GM12878 (cell line): ENCODE measurements at regions of chr1 and their contacts with region 1.

Region 1: DNA sequence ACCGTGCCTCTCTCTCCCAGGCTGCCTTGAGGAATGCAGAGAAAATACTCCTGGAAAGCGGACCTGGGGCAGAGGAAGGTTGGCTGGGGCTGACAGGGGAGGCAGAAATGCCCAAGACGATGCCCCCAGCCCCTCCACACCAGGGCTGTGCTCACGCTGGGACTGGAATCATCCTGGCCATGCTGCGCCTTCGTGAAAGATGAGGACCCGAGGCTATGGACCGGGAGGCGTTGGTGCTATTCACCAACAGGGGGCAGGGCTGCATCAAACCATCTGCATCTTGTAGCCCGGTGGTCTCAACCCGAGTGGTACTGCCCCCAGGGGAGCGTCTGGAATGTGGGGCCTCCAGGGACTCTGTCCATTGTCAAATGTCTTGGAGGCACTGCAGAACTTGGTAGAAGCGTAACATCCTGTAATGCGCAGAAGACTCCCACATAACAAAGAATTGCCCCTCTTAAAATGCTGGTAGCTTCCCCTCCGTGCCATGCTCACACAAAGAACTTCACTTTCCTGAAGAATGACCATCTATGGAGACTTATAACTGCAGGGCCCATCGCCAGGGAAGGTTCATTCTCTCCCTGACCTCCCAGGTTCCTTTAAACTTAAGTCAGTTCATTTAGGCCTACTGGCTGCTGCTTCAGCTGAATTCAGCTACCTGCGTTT is 251.2 kb downstream of the RRAGC start:
- DNase-seq: no peak
- ATAC-seq: peak; percentile 53; the same call in 2 of the 3 replicates
- H3K4me3 ChIP-seq: no peak overlapping the region
- H3K27ac ChIP-seq: no peak overlapping the region
- H3K4me1 ChIP-seq: no peaks in the 10 kb centered on the region
- H3K27me3 ChIP-seq: peaks cover 0 to 3% of the 10 kb centered on the region in 2 experiments; a peak in 3 of 4 replicates
- CTCF ChIP-seq: peak; percentile 50 to 63 (median 59); a peak in 5 of 6 replicates
- EP300 ChIP-seq: no peak
- POLR2A ChIP-seq: no peak
- RAD21 ChIP-seq: peak; percentile 34

Region 2: GRCh38 chr1:38834937-38835827 is 226.8 kb after region 1 on chr1:
- CTCF ChIA-PET with region 1: interaction called, 9 read pairs
- POLR2A ChIA-PET with region 1: no interaction called
- RAD21 ChIA-PET with region 1: interaction called, 5 read pairs
- SMC1A ChIA-PET with region 1: interaction called, 4 read pairs
- in situ Hi-C with region 1: no loop called
- intact Hi-C with region 1: loop called (anchors 5 kb)
- DNase-seq: peak; percentile 60
- ATAC-seq: peak; percentile 98
- H3K4me3 ChIP-seq: no peak overlapping the region
- H3K27ac ChIP-seq: no peak overlapping the region
- H3K4me1 ChIP-seq: no peaks in the 10 kb centered on the region
- H3K27me3 ChIP-seq: peaks cover 0 to 2% of the 10 kb centered on the region in 2 experiments; a peak in 2 of 4 replicates
- CTCF ChIP-seq: peak; percentile 68 to 86 (median 77)
- EP300 ChIP-seq: no peak
- POLR2A ChIP-seq: no peak
- RAD21 ChIP-seq: peak; percentile 84